A673 (cell line): ENCODE measurements at regions of chr2 and their contacts with region 1.

Region 1: DNA sequence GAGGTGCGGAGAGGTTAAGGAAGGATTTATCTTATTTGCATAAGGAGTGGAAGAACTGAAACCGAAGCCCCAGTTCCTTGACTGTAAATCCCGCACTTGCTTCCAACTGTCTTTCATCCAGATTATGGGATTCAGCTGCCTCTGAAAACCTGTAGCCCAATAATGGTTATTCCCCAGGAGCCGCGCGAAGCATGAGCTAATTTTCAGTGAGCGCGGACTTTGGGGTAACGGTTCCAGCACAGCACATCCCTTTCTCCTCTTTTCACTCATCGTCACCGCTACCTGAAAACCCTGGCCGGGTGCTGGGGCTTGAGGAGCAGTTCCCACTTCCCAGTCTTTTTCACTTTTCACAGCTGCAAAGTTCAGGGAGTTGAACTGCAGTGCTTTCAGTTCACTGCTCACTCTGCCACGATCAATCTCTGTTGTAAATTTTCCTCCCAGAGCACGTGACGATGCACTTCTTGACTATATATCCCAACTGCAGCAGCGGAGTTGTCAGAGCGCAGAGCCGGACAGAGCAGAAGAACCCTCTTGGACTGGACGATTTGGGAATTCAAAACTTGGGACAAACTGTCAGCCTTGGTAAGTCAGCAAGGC is at the start of gene KCNE4:
- DNase-seq: peak; percentile 91
- H3K4me3 ChIP-seq: peak within 1 kb of the TSS; percentile 69
- H3K27ac ChIP-seq: peak within 1 kb of the TSS; percentile 94
- H3K4me1 ChIP-seq: peaks cover 60% of the 10 kb centered on the region
- H3K27me3 ChIP-seq: no peaks in the 10 kb centered on the region
- CTCF ChIP-seq: no peak
- total RNA-seq, gene KCNE4: 68.0 and 82.5 TPM in 2 replicates

Region 2: GRCh38 chr2:222878877-222879603 is 172.8 kb before region 1 on chr2:
- CTCF ChIA-PET with region 1: no interaction called
- POLR2A ChIA-PET with region 1: no interaction called
- intact Hi-C with region 1: no loop called
- DNase-seq: no peak
- H3K4me3 ChIP-seq: no peak overlapping the region
- H3K27ac ChIP-seq: no peak overlapping the region
- H3K4me1 ChIP-seq: peaks cover 43% of the 10 kb centered on the region
- H3K27me3 ChIP-seq: no peaks in the 10 kb centered on the region
- CTCF ChIP-seq: no peak

Region 3: DNA sequence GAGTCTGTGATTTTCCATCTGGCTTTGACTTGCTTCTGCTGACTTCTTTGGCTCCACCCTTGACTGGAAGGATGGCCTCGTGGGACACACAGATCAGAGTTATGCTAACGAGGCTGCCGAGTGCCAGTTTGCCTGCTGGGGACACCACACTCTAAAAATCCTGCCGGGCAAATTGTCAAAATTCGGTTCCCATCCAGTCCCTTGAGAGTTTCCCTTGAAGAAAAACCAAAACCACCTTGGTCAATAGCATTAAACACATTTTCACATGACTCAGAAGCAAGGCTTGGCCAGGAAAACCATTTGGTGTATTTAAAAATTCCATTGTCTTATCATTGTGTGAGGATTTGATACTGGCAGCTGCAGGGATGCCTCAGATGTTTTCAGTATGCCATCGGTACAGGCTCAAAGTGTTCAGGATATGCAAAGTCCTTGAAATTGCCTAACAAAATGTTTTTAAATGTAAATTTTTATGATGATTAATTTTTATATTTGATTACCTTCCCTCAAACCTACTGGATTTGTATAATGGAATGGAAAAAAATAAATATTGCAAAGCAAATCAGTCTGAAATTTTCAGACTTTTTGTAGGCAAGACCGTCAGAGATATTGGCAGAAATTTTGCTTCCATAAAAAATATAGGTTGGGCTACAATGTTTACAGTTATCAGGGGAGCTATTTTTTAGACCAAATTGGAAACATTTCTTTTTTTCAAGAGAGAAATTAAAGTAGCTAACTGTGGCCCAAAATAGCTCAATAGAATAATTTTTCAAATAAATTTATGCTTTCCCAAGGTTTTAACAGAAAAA is 41.8 kb after region 1 on chr2:
- CTCF ChIA-PET with region 1: no interaction called
- POLR2A ChIA-PET with region 1: no interaction called
- intact Hi-C with region 1: loop called (anchors 5 kb)
- DNase-seq: peak; percentile 99
- H3K4me3 ChIP-seq: peak overlapping the region; percentile 1
- H3K27ac ChIP-seq: peak overlapping the region; percentile 73
- H3K4me1 ChIP-seq: peaks cover 72% of the 10 kb centered on the region
- H3K27me3 ChIP-seq: no peaks in the 10 kb centered on the region
- CTCF ChIP-seq: 0 out of 2 replicates have a peak, but pooled peaks have one; percentile 21